ENCODE measurements at regions of chrX and their contacts with region 1.

Region 1: GRCh38 chrX:48071064-48071985 is at the start of gene ZNF630:
- DNase-seq: peak; percentile 76 to 86 (median 80)
- ATAC-seq: peak; percentile 88 to 98 (median 96)
- H3K4me3 ChIP-seq: peak within 1 kb of the TSS; percentile 49 to 84 (median 69)
- H3K27ac ChIP-seq: peak within 1 kb of the TSS; percentile 74 to 91 (median 86)
- H3K4me1 ChIP-seq: no peaks in the 10 kb centered on the region
- H3K27me3 ChIP-seq: peaks cover 0 to 7% (median 0%) of the 10 kb centered on the region in 9 donors
- CTCF ChIP-seq: no peak
- POLR2A ChIP-seq: peak in 1 of 2 donors; percentile 34
- total RNA-seq, gene ZNF630: 1.7 to 4.3 (median 2.3) TPM

Region 2: DNA sequence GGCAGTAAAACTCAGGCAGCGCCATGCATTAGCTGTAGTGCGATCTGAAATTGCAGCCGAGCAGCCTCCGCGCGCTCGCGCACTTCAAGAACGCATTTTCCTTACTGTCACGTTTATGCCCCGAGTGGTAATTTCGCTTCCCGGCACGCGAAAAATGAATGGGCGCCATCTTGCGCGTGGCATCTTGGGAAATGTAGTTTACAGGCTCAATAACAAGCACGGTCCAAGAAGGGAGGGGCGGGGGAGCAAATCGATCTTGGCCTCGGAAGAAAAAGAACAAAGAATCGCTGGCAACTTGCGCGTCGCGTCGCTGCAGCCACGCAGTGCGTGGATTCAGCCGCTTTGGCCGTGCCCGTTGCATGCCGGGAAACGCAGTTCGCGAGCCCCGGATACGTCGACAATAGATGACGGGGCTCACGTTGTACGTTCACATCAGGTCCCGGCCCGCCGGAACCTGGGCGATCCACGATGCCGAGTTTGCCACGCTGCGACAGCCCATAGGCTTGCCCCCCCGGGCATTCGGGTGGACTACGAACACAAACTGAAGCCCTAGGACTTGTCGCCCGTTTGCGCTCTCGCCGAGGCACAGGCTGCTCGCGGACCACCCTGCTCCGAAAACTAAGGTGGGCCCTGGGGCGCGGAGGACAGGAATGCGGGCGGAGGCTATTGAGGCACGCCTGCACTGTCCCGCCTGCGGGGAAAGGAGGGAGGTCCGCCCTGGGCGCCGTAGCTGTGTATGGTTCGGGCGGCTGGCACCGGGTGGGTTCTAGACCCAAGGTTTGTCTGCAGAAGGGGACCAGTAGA is 404.7 kb after region 1 on chrX and contains the start of gene FTSJ1:
- intact Hi-C with region 1: loop called in 1 of 10 experiments (anchors 10 kb)
- DNase-seq: peak; percentile 86 to 91 (median 89)
- ATAC-seq: peak; percentile 94 to 98 (median 96)
- H3K4me3 ChIP-seq: peak within 1 kb of the TSS; percentile 53 to 82 (median 73)
- H3K27ac ChIP-seq: peak within 1 kb of the TSS; percentile 47 to 87 (median 76)
- H3K4me1 ChIP-seq: peaks cover 0 to 8% (median 0%) of the 10 kb centered on the region in 12 donors
- H3K27me3 ChIP-seq: no peaks in the 10 kb centered on the region
- CTCF ChIP-seq: no peak
- POLR2A ChIP-seq: peak in 1 of 2 donors; percentile 35
- total RNA-seq, gene FTSJ1: 13.6 to 34.3 (median 18.1) TPM

Region 3: GRCh38 chrX:48508400-48509244 is 437.3 kb after region 1 on chrX and contains the start of gene PORCN:
- intact Hi-C with region 1: no loop called
- DNase-seq: peak; percentile 87 to 92 (median 89)
- ATAC-seq: peak; percentile 85 to 97 (median 95)
- H3K4me3 ChIP-seq: peak within 1 kb of the TSS; percentile 31 to 97 (median 76)
- H3K27ac ChIP-seq: peak within 1 kb of the TSS in 11 of 12 donors; percentile 50 to 86 (median 79)
- H3K4me1 ChIP-seq: peaks cover 0 to 10% (median 3%) of the 10 kb centered on the region in 12 donors
- H3K27me3 ChIP-seq: no peaks in the 10 kb centered on the region
- CTCF ChIP-seq: no peak
- POLR2A ChIP-seq: peak in 1 of 2 donors; percentile 68
- total RNA-seq, gene PORCN: 9.6 to 35.7 (median 17.3) TPM

Region 4: GRCh38 chrX:48937054-48937907 is 866.0 kb after region 1 on chrX:
- intact Hi-C with region 1: no loop called
- DNase-seq: peak; percentile 41 to 77 (median 46)
- ATAC-seq: peak; percentile 62 to 82 (median 66)
- H3K4me3 ChIP-seq: peak overlapping the region in 1 of 12 donors; percentile 28
- H3K27ac ChIP-seq: peak overlapping the region in 6 of 12 donors; percentile 3 to 82 (median 34)
- H3K4me1 ChIP-seq: peaks cover 0 to 72% (median 8%) of the 10 kb centered on the region in 12 donors
- H3K27me3 ChIP-seq: no peaks in the 10 kb centered on the region
- CTCF ChIP-seq: peak in 1 of 12 donors; percentile 13
- POLR2A ChIP-seq: no peak

Region 5: DNA sequence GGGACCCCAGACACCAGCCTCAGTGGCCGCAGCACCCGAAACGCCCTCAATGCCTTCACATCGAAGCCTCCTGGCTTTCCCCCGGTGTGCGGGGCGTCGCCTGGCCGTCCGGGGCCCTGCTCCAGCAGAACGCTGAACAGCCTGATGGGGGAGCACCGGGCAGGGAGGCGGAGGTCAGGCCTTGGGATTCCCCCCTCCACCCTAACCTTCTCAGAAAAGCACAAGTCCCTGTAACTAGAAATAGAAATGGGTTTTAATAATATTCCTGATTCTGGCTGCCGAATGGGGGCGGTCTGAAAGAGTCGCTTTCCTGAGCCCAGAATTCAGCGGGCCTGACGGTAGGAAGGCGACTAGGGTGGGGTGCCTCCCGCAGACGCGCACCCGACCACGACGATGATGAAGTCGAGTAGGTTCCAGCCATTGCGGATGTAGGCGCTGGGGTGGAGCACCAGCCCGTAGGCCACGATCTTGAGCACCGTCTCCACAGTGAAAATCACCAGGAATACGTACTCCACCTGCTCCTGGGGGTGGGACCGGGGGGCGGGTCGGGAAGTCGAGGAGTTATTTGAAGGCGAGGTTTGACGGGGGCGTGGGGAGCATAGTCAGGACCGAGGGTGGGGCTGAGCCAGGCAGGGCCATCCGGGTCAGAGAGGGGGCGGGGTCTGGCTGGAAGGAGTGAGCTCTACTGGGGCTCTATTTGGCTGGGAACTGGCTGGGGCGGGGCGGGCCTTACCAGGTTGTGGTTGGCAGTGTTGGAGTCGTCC is 1159.3 kb after region 1 on chrX:
- intact Hi-C with region 1: no loop called
- DNase-seq: peak; percentile 62 to 78 (median 75)
- ATAC-seq: peak; percentile 31 to 75 (median 72)
- H3K4me3 ChIP-seq: peak overlapping the region in 10 of 12 donors; percentile 31 to 52 (median 43)
- H3K27ac ChIP-seq: peak overlapping the region in 3 of 12 donors; percentile 24 to 42 (median 30)
- H3K4me1 ChIP-seq: peaks cover 0 to 8% (median 0%) of the 10 kb centered on the region in 12 donors
- H3K27me3 ChIP-seq: no peaks in the 10 kb centered on the region
- CTCF ChIP-seq: peak in 2 of 12 donors; percentile 18 to 27
- POLR2A ChIP-seq: no peak